MCF 10A (cell line): ENCODE measurements at regions of chr7 and their contacts with region 1.

Region 1: DNA sequence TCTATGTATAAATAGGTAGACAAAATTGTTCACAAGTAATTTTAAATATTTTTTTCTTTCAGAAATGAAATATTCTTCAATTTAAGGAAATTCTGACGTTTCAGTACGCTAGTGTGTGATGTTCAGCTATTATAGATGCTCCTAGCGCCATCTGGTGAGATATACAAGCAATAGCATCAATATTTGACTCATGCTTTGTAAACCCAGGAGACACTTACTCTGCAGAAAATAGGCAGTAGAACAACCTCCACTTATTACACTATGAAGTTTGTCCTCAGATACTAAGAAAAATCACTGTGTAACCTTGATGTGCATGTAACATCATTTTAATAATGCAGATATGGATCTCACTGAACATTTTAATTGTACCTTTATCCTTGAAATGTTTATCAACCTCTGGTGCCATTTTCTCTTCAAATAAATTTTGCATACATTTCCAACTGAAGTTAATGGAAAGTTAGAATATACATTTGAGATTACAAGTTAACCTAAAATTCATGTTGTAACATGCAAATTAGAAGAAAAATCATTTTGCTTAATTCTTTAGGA is 151.5 kb upstream of the FAM3C start:
- DNase-seq: peak; percentile 68
- H3K4me3 Mint-ChIP-seq: no peak overlapping the region
- H3K27ac Mint-ChIP-seq: no peak overlapping the region
- H3K4me1 Mint-ChIP-seq: peaks cover 16% of the 10 kb centered on the region
- H3K27me3 Mint-ChIP-seq: no peaks in the 10 kb centered on the region
- CTCF ChIP-seq: peak; percentile 71

Region 2: DNA sequence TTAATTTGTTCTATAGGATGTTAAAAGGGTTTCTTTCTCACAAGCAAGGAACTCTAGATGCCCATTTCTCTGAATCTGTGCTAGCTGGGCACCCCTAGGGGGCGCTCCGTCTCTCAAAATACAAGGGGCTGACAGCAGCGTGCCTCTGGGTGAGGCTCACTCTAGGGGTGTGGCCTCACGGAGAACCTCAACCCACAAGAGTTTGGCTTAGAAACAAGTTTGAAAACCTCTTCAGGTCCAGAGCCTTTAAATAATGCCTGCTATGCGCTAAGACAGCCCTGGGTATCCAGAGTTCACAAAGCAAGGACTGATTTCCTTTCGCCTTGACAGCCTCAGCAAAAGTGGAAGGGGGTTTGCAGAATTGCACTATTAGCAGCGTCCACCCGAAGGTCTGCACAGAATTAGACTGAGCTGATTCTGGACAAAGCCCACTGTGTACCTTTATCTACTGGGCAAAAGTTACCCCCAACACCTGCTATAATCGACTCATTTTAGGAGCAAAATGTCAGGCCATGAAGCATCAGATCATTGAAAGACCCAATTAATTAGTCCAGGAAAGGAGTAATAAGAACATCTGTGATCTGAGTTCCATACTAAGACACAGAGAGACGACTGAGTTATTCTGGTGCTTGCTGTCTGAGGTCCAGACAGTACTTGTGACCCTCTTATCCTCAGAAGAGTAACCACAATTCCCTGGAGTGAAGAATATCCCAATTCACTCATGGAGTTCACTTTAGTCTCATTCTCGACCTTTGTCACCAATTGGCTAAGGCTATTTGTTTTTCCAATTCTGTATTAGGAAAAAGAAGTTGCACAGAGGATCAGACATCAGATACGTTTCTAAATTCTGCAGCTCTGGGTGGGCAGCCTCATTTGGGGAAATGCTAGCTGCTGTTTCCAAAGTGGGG is 559.7 kb before region 1 on chr7:
- CTCF ChIA-PET with region 1: no interaction called
- POLR2A ChIA-PET with region 1: no interaction called
- intact Hi-C with region 1: loop called (anchors 10 kb)
- DNase-seq: peak; percentile 91
- H3K4me3 Mint-ChIP-seq: peak overlapping the region; percentile 56
- H3K27ac Mint-ChIP-seq: no peak overlapping the region
- H3K4me1 Mint-ChIP-seq: peaks cover 6% of the 10 kb centered on the region
- H3K27me3 Mint-ChIP-seq: peaks cover 49% of the 10 kb centered on the region
- CTCF ChIP-seq: peak; percentile 81

Region 3: GRCh38 chr7:121126801-121127534 is 420.6 kb before region 1 on chr7:
- CTCF ChIA-PET with region 1: interaction called, 4 read pairs
- POLR2A ChIA-PET with region 1: no interaction called
- intact Hi-C with region 1: loop called (anchors 5 kb)
- DNase-seq: peak; percentile 39
- H3K4me3 Mint-ChIP-seq: no peak overlapping the region
- H3K27ac Mint-ChIP-seq: no peak overlapping the region
- H3K4me1 Mint-ChIP-seq: no peaks in the 10 kb centered on the region
- H3K27me3 Mint-ChIP-seq: no peaks in the 10 kb centered on the region
- CTCF ChIP-seq: peak; percentile 39

Region 4: DNA sequence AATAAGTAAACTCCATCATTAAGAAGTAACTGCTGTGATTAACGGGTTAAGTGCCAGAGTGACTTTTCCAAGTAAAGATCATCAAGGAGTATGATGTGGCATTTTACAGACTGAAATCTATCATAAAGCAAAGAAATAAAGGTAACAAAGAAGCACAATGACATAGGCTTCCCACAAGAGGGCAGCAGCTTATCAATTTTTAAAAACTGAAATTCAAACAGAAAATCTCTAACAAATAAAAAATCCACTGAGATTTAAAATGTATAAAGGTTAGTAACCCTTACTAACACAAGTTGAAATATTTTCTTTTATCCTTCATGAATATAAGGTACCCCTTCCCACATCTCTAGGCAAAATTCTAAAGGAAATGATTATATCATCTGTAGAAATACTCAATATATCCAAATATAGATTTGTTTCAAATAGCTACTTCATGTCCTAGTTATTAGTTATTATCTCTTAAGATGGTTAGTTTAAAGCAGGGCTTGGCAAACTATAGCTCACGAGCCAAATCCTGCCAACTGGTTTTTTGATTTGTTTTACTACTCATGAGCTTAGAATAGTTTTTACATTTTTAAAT is 180.7 kb before region 1 on chr7:
- CTCF ChIA-PET with region 1: interaction called, 67 read pairs
- POLR2A ChIA-PET with region 1: interaction called, 7 read pairs
- intact Hi-C with region 1: loop called (anchors 1 kb)
- DNase-seq: peak; percentile 37
- H3K4me3 Mint-ChIP-seq: no peak overlapping the region
- H3K27ac Mint-ChIP-seq: peak overlapping the region; percentile 39
- H3K4me1 Mint-ChIP-seq: peaks cover 7% of the 10 kb centered on the region
- H3K27me3 Mint-ChIP-seq: no peaks in the 10 kb centered on the region
- CTCF ChIP-seq: peak; percentile 72

Region 5: DNA sequence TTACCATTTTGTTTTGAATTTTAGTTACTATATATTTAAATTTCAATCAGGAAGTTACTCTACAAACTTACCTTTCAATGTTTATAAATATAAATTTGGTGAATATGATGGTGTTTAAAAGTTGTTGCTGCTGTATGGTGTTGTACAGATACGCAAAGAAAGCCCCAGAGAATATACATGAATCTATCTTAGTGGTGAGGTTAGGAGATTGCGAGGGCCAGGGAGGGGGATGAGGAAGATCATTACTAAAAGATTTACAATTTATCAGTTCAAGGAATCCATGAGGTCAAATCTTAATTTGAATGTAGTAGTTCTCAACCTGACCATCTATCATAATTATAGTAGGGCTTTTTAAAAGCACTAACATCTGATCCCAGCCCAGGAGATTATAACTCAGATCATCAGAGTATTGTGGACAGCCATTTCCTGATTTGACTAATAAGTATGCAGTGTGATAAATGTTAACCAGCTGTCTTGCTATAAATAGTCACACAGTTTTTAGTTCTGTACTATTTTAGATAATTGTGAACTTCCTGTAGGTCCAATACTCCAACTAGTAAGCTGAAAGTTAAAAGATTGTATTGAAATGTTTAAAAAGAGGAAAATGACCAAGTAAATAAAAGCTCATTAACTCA is 175.1 kb before region 1 on chr7:
- CTCF ChIA-PET with region 1: interaction called, 67 read pairs
- POLR2A ChIA-PET with region 1: interaction called, 7 read pairs
- intact Hi-C with region 1: loop called (anchors 1 kb)
- DNase-seq: no peak
- H3K4me3 Mint-ChIP-seq: no peak overlapping the region
- H3K27ac Mint-ChIP-seq: peak overlapping the region; percentile 25
- H3K4me1 Mint-ChIP-seq: peaks cover 7% of the 10 kb centered on the region
- H3K27me3 Mint-ChIP-seq: no peaks in the 10 kb centered on the region
- CTCF ChIP-seq: no peak

Region 6: GRCh38 chr7:121395961-121396757 is 151.5 kb before region 1 on chr7 and contains the start of gene FAM3C:
- CTCF ChIA-PET with region 1: interaction called, 6 read pairs
- POLR2A ChIA-PET with region 1: interaction called, 33 read pairs
- intact Hi-C with region 1: loop called (anchors 1 kb)
- DNase-seq: peak; percentile 95
- H3K4me3 Mint-ChIP-seq: peak within 1 kb of the TSS; percentile 80
- H3K27ac Mint-ChIP-seq: peak within 1 kb of the TSS; percentile 23
- H3K4me1 Mint-ChIP-seq: peaks cover 17% of the 10 kb centered on the region
- H3K27me3 Mint-ChIP-seq: no peaks in the 10 kb centered on the region
- CTCF ChIP-seq: peak; percentile 82
- total RNA-seq, gene FAM3C: 56.5 and 64.1 TPM in 2 replicates

Region 7: DNA sequence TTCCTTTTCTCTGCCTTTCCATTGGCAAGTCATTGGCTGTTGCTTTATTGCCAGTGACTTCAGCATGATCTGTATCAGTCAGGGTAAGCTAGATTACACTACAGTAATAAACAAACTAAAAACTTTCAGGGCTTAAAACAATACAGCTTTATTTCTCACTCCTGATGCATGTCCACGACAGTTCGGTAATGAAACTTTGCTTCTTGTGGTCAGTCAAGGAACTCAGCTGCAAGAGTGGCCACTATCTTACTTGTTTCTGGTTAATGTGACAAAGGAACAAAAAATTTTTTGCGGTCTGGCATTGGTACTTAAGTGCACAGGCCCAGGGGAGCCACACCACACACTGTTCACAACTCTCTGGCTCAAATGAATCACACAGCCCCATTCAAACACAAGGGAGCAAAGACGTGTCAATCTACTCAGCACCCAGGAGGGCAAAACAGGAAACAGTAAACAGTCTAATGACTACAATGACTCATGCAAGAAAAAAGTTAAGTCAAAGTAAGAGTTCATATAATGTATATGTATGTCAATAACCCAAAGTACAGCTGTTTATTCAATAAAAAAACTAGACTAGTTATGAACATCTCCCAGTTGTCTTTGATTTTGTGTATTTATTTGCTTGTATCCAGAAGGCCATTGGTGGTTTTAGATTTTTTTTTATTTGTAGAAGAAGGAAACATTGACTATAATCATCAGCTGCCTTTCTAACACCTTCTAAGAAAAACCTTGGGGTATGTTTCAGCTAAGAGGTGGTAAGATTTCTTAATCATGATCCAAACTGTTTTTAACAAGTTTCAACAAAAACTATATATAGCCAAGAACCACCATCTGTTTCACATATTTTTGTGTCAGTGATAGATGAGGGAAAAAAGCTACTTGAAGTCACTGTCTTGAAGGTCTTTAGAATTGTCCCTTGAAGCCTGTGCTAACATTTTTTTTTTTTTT is 17.1 kb before region 1 on chr7:
- CTCF ChIA-PET with region 1: interaction called, 6 read pairs
- POLR2A ChIA-PET with region 1: interaction called, 21 read pairs
- intact Hi-C with region 1: loop called (anchors 1 kb)
- DNase-seq: peak; percentile 95
- H3K4me3 Mint-ChIP-seq: peak overlapping the region; percentile 52
- H3K27ac Mint-ChIP-seq: peak overlapping the region; percentile 86
- H3K4me1 Mint-ChIP-seq: peaks cover 35% of the 10 kb centered on the region
- H3K27me3 Mint-ChIP-seq: no peaks in the 10 kb centered on the region
- CTCF ChIP-seq: no peak